ENCODE measurements at regions of chr7 and their contacts with region 1.

Region 1: GRCh38 chr7:97104719-97105238 is 12.7 kb upstream of the SDHAF3 start:
- DNase-seq: peak; percentile 58 to 68 (median 64)
- H3K4me3 ChIP-seq: no peak overlapping the region
- H3K4me3 Mint-ChIP-seq: no peak overlapping the region
- H3K27ac ChIP-seq: no peak overlapping the region
- H3K27ac Mint-ChIP-seq: no peak overlapping the region
- H3K4me1 ChIP-seq: peaks cover 0 to 3% of the 10 kb centered on the region in 2 donors
- H3K4me1 Mint-ChIP-seq: no peaks in the 10 kb centered on the region
- H3K27me3 ChIP-seq: no peaks in the 10 kb centered on the region
- H3K27me3 Mint-ChIP-seq: peaks cover 0 to 5% (median 1%) of the 10 kb centered on the region in 3 donors
- CTCF ChIP-seq: peak; percentile 90

Region 2: DNA sequence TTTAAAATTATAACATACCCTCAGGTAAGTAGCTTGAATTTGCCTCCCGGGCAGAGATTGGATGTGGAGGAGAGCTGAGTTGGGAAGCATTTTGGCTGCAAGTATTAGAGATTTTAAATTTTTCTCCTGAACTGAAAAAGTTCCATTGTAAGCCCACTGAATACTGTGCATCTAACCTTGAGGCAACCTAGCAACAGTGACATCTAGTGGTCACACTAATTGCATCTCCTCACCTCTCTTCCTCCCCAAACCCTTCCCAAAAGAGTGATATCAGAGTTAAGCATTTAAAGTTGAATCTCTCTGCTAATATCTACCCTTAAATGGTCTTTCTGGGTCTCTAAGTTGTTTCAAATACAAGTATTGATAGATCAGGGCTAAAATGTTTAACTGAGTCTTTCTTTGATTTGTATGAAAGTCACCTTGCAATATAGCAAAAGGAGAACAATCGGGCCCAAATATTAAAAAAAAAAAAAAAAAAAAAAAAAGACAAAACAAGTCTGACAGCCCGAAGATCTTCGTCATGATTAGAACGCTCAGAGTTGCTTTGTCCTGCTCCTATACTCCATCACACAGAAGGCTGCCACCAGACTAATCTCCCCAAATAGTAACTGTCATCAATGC is 39.7 kb before region 1 on chr7:
- intact Hi-C with region 1: no loop called
- DNase-seq: peak; percentile 4 to 15 (median 12)
- H3K4me3 ChIP-seq: no peak overlapping the region
- H3K4me3 Mint-ChIP-seq: no peak overlapping the region
- H3K27ac ChIP-seq: no peak overlapping the region
- H3K27ac Mint-ChIP-seq: no peak overlapping the region
- H3K4me1 ChIP-seq: no peaks in the 10 kb centered on the region
- H3K4me1 Mint-ChIP-seq: no peaks in the 10 kb centered on the region
- H3K27me3 ChIP-seq: no peaks in the 10 kb centered on the region
- H3K27me3 Mint-ChIP-seq: peaks cover 0 to 2% (median 1%) of the 10 kb centered on the region in 3 donors
- CTCF ChIP-seq: peak; percentile 74

Region 3: GRCh38 chr7:97179454-97180104 is 74.8 kb after region 1 on chr7:
- intact Hi-C with region 1: loop called (anchors 2 to 5 kb)
- DNase-seq: peak; percentile 45 to 62 (median 56)
- H3K4me3 ChIP-seq: no peak overlapping the region
- H3K4me3 Mint-ChIP-seq: no peak overlapping the region
- H3K27ac ChIP-seq: no peak overlapping the region
- H3K27ac Mint-ChIP-seq: no peak overlapping the region
- H3K4me1 ChIP-seq: peaks cover 2 to 15% of the 10 kb centered on the region in 2 donors
- H3K4me1 Mint-ChIP-seq: peaks cover 19% of the 10 kb centered on the region
- H3K27me3 ChIP-seq: no peaks in the 10 kb centered on the region
- H3K27me3 Mint-ChIP-seq: peaks cover 0 to 6% (median 0%) of the 10 kb centered on the region in 3 donors
- CTCF ChIP-seq: peak; percentile 90

Region 4: DNA sequence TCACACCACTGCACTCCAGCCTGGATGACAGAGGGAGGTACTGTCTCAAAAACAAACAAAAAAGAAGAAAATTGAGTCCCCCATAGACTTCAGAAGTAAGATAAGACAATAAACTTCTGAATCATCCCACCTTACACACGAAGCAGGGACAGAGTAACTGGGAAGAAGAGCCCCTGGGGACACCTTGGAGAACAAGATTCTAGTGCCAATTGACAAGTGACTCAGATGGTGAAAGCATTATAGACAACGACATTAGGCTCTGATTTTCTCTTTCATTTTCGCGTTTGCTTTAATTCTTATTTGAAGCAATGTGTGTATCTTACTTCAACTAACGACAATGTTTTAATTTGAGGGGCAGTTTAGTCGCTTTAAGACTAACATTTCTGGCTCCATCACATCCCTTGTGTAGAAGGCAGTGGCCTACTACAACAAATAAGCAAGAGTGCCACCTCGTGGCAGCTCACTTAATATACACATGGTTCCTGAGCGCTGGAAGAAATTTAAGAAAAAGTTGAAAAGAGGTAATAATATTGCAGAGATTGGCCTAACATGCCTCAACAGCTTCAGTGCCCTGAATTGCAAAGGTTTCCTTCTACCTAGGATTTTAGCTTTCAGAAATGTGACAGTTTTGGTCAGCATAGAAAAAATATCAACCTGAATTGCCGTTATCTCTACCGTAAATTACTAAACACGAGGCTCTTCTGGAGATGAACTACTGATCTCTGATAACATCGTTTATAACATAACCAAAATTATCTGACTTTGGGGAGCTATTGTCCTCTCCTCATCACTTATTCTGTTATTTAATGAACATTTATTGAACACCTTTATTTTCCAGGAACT is 730.7 kb after region 1 on chr7:
- intact Hi-C with region 1: loop called (anchors 2 to 5 kb)
- DNase-seq: peak; percentile 14 to 55 (median 39)
- H3K4me3 ChIP-seq: no peak overlapping the region
- H3K4me3 Mint-ChIP-seq: no peak overlapping the region
- H3K27ac ChIP-seq: no peak overlapping the region
- H3K27ac Mint-ChIP-seq: no peak overlapping the region
- H3K4me1 ChIP-seq: no peaks in the 10 kb centered on the region
- H3K4me1 Mint-ChIP-seq: no peaks in the 10 kb centered on the region
- H3K27me3 ChIP-seq: no peaks in the 10 kb centered on the region
- H3K27me3 Mint-ChIP-seq: peaks cover 4 to 22% (median 14%) of the 10 kb centered on the region in 3 donors
- CTCF ChIP-seq: peak; percentile 78